PC-9 (cell line): ENCODE measurements at regions of chr12 and their contacts with region 1.

Region 1: GRCh38 chr12:57852200-57852599 is 5.7 kb upstream of the CTDSP2 start:
- DNase-seq: no peak
- H3K4me3 ChIP-seq: no peak overlapping the region
- H3K27ac ChIP-seq: no peak overlapping the region
- H3K4me1 ChIP-seq: no peaks in the 10 kb centered on the region; the same call in 1 of the 2 replicates
- H3K27me3 ChIP-seq: no peaks in the 10 kb centered on the region
- CTCF ChIP-seq: no peak

Region 2: GRCh38 chr12:57836442-57837375 is 15.5 kb before region 1 on chr12:
- CTCF ChIA-PET with region 1: no interaction called
- POLR2A ChIA-PET with region 1: interaction called, 24 read pairs
- intact Hi-C with region 1: no loop called
- DNase-seq: no peak
- H3K4me3 ChIP-seq: no peak overlapping the region
- H3K27ac ChIP-seq: no peak overlapping the region
- H3K4me1 ChIP-seq: no peaks in the 10 kb centered on the region
- H3K27me3 ChIP-seq: no peaks in the 10 kb centered on the region
- CTCF ChIP-seq: no peak